ENCODE measurements at regions of chr1 and their contacts with region 1.

Region 1: GRCh38 chr1:65687428-65688214 is 105.1 kb upstream of the PDE4B start:
- DNase-seq: peak; percentile 88
- ATAC-seq: peak; percentile 82 to 87

Region 2: GRCh38 chr1:65067491-65068201 is 620.0 kb before region 1 on chr1:
- intact Hi-C with region 1: loop called in 1 of 2 experiments (anchors 10 kb)
- DNase-seq: peak; percentile 74
- ATAC-seq: peak; percentile 38 to 39

Region 3: GRCh38 chr1:65235867-65236805 is 451.5 kb before region 1 on chr1:
- intact Hi-C with region 1: loop called in 1 of 2 experiments (anchors 5 kb)
- DNase-seq: no peak
- ATAC-seq: no peak

Region 4: GRCh38 chr1:65431111-65431705 is 256.4 kb before region 1 on chr1:
- intact Hi-C with region 1: loop called in 1 of 2 experiments (anchors 2 kb)
- DNase-seq: no peak
- ATAC-seq: peak in 1 of 2 donors; percentile 38

Measured in left cardiac atrium (tissue), 4 donors.